ENCODE measurements at regions of chr10 and their contacts with region 1.

Region 1: DNA sequence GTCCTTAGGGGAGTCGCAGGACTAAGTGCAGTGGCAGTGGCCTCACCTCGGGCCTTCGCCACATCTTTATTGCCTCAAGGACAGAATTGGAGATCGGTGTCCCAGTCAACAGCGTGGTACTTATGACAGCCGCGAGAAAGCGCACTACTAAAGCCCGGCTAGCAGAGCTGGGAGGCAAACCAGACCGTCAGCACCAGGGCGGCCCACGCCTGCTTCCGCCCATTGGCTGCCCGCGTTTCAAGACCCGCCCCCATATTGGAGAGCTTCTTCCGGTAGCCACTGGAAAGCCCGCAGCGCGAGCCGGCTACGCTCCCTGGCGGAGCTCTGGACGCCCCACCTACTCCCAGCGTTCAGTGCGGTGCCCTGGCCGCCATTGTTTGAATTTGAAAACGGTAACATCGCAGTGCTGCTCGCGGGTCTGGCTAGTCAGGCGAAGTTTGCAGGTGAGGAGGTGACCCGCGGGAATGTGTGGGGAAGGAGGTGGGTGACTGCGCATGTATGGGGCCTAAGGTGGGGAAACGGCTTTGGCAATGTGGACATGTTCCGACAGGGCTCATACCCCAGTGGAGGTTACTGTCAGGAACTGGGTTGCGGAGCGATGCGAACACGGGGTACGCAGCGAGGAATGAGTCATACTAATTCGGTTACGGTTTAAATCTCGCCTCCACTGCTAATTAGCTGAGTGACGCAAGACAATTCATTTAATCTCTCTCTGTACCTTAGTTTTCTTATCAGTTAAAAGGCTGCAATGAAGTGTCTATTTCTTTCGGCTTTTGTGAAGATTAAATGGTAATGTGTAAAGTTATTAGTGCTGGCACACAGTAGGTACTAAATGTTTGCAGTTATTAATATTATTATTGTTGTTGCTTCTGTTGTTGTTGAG is at the start of gene KIF20B:
- DNase-seq: peak; percentile 98
- H3K4me3 Mint-ChIP-seq: peak within 1 kb of the TSS; percentile 88
- H3K27ac Mint-ChIP-seq: peak within 1 kb of the TSS; percentile 95
- H3K4me1 Mint-ChIP-seq: peaks cover 35% of the 10 kb centered on the region
- H3K27me3 Mint-ChIP-seq: no peaks in the 10 kb centered on the region
- total RNA-seq, gene KIF20B: 65.3 to 65.6 TPM

Region 2: DNA sequence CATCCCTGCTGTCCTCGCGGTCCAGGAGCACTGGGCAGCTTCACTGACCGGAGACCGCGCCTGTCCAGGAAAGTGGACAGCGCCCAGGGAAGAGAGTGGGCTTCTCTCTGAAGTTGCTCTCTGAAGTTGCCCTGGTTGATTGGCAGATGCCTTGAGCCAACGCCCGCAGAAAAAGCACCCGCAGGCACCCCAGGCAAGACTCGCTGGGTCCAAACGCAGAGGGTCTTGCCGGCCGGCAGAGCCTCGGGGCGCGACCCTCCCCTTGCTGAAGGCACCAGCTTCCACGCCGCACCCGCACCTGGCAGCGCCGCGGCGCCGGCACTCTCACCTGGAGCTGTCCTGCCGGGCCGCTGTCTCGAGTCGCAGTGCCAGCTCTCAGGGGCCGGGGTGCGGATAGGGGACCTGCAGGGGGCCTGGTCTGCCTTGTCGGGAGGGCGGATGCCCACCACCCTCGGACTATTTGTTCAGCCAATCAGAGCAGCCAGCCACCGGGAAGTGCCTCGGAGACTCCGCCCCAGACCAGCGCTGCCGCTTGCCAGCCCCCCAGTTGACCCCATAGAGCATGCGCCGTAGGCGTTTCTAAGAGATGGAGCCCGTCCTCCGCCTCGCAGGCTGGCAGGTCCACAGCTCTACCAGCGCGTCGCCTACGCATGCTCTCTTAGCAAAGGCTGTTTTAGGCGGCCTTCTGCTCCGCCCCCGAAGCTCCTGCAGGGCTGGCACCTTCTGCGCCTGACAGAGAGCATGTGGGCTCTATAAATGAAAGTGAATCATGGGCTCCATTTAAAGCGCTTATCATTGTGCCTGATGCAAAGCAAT is 449.9 kb before region 1 on chr10 and contains the start of gene LIPA:
- CTCF ChIA-PET with region 1: no interaction called
- POLR2A ChIA-PET with region 1: no interaction called
- intact Hi-C with region 1: loop called (anchors 1 kb)
- DNase-seq: peak; percentile 96
- H3K4me3 Mint-ChIP-seq: peak within 1 kb of the TSS; percentile 83
- H3K27ac Mint-ChIP-seq: peak within 1 kb of the TSS; percentile 46
- H3K4me1 Mint-ChIP-seq: peaks cover 30% of the 10 kb centered on the region
- H3K27me3 Mint-ChIP-seq: no peaks in the 10 kb centered on the region
- total RNA-seq, gene LIPA: 22.7 to 23.8 TPM

Region 3: GRCh38 chr10:89609833-89610346 is 91.6 kb before region 1 on chr10:
- CTCF ChIA-PET with region 1: no interaction called
- POLR2A ChIA-PET with region 1: interaction called, 3 read pairs
- intact Hi-C with region 1: loop called (anchors 1 kb)
- DNase-seq: peak; percentile 13
- H3K4me3 Mint-ChIP-seq: no peak overlapping the region
- H3K27ac Mint-ChIP-seq: peak overlapping the region; percentile 55
- H3K4me1 Mint-ChIP-seq: peaks cover 22% of the 10 kb centered on the region
- H3K27me3 Mint-ChIP-seq: no peaks in the 10 kb centered on the region

Region 4: DNA sequence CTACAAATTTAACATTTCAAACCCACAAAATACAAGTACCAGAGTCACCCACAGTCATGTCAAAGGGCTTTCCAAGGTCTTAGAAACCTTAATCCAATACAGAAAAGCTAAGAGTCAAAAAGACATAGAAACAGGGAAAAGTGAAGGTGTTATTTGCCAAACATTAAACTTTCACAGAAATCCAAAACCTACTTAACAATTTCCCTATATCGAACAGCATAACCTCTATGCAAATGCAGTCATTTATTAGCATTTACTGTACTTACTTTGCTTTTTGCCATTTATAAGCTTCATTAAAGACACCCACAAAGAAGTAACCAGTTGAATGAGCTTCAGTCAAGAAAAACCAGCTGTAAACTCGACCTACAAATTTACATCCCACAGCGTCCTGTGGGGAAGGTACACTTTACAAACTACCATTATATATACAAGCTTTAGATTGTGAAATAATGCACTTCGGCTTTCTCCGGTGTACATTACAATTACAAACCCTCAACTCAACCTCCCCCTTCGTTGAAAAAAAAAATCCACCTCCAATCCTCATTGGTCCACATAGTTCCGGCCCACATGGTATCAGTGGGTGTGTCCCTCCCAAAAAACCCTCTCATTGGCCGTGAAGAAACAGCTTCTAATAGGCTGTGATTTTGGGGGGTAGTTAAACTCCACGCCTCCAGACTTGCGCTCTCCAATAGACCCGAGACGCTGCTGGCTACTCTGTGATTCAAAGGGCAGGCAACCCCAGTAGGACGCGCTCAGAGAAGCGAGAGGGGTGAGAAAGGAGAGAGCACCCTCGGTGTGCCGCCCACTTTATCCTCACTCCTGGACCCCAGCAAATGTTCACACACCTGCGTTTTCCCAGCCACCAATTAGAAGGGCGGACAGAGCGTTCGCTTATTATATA is 57.8 kb before region 1 on chr10:
- CTCF ChIA-PET with region 1: interaction called, 9 read pairs
- POLR2A ChIA-PET with region 1: interaction called, 16 read pairs
- intact Hi-C with region 1: loop called (anchors 1 kb)
- DNase-seq: peak; percentile 81
- H3K4me3 Mint-ChIP-seq: no peak overlapping the region
- H3K27ac Mint-ChIP-seq: no peak overlapping the region
- H3K4me1 Mint-ChIP-seq: peaks cover 7% of the 10 kb centered on the region
- H3K27me3 Mint-ChIP-seq: no peaks in the 10 kb centered on the region

Region 5: DNA sequence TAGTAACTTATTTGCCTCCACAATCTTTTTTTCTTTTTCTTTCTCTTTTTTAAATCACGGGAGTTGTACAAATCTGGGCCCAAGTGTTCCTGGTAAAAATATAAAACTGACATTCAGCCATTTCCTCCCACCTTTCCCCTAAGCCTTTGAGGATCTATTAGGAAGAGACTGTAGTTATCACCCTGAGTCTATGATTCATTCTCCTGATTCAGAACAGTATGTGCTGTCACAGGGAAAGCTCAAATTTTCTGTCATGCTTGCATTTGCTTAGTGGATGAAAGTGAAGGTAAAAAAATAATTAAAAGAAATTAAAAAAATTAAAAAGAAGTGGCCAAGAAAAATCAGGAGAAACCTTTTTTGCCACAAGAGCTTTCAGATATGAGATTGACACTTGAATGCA is 71.6 kb after region 1 on chr10:
- CTCF ChIA-PET with region 1: no interaction called
- POLR2A ChIA-PET with region 1: no interaction called
- intact Hi-C with region 1: no loop called
- DNase-seq: no peak
- H3K4me3 Mint-ChIP-seq: no peak overlapping the region
- H3K27ac Mint-ChIP-seq: no peak overlapping the region
- H3K4me1 Mint-ChIP-seq: peaks cover 6% of the 10 kb centered on the region
- H3K27me3 Mint-ChIP-seq: no peaks in the 10 kb centered on the region

Region 6: GRCh38 chr10:89861584-89862301 is 160.3 kb after region 1 on chr10:
- CTCF ChIA-PET with region 1: no interaction called
- POLR2A ChIA-PET with region 1: no interaction called
- intact Hi-C with region 1: loop called (anchors 5 kb)
- DNase-seq: peak; percentile 62
- H3K4me3 Mint-ChIP-seq: no peak overlapping the region
- H3K27ac Mint-ChIP-seq: peak overlapping the region; percentile 81
- H3K4me1 Mint-ChIP-seq: peaks cover 27% of the 10 kb centered on the region
- H3K27me3 Mint-ChIP-seq: no peaks in the 10 kb centered on the region

Region 7: DNA sequence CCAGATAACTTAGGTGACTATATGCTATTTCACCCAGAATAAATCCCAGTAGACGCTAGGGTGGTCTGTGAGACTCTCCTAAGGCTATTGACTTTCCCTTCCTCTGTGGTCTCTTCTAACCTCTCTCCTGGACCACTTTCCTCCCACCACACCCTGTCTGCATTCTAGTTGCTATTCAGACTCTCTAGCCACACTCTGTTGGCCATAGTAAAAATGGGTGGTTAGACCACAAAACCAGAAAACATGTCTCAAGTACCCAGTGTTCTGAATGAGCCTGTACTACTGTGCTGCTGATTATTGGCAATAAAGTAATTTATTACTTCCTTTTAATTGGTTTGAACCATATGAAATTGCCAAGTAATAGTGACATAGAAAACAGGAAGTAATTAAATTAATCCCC is 240.7 kb after region 1 on chr10:
- CTCF ChIA-PET with region 1: no interaction called
- POLR2A ChIA-PET with region 1: no interaction called
- intact Hi-C with region 1: no loop called
- DNase-seq: no peak
- H3K4me3 Mint-ChIP-seq: no peak overlapping the region
- H3K27ac Mint-ChIP-seq: no peak overlapping the region
- H3K4me1 Mint-ChIP-seq: peaks cover 9% of the 10 kb centered on the region
- H3K27me3 Mint-ChIP-seq: peaks cover 6% of the 10 kb centered on the region

Region 8: GRCh38 chr10:91409869-91410637 is 1708.6 kb after region 1 on chr10 and contains the start of gene HECTD2:
- CTCF ChIA-PET with region 1: no interaction called
- POLR2A ChIA-PET with region 1: no interaction called
- intact Hi-C with region 1: loop called (anchors 10 kb)
- DNase-seq: peak; percentile 82
- H3K4me3 Mint-ChIP-seq: peak within 1 kb of the TSS; percentile 79
- H3K27ac Mint-ChIP-seq: peak within 1 kb of the TSS; percentile 83
- H3K4me1 Mint-ChIP-seq: peaks cover 13% of the 10 kb centered on the region
- H3K27me3 Mint-ChIP-seq: no peaks in the 10 kb centered on the region
- total RNA-seq, gene HECTD2: 4.0 to 5.5 TPM

Measured in activated CD4-positive, alpha-beta memory T cell treated with anti-CD3 and anti-CD28 coated beads for 36 hours (primary cell).